ENCODE measurements at regions of chrX and their contacts with region 1.

Region 1: DNA sequence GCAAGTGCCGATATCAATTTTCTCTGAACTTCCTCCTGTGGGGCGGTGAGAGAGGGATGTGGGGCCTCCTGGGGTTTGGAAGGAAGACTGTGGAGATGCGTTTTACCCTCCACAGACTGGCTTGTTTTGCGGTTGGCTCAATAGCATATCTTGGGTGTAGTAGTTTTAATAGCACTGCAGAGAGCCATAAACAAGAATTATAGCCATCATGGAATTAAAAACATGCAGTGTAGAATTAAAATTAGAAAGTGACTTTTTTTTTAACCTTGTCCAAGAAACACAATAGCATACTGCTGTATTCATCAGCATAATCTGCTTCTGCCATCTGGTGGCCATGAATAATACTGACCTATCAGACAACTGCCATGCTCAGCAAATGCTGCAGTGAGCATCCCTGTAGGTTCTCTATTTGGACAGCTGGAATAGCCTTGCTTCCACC is 47.3 kb upstream of the SCML1 start:
- DNase-seq: peak; percentile 70 to 79
- H3K4me3 ChIP-seq: no peak overlapping the region
- H3K4me1 ChIP-seq: peaks cover 19% of the 10 kb centered on the region
- H3K27me3 ChIP-seq: no peaks in the 10 kb centered on the region

Region 2: GRCh38 chrX:17104433-17104832 is 585.6 kb before region 1 on chrX:
- in situ Hi-C with region 1: loop called (anchors 25 kb)
- DNase-seq: no peak
- H3K4me3 ChIP-seq: no peak overlapping the region
- H3K4me1 ChIP-seq: no peaks in the 10 kb centered on the region
- H3K27me3 ChIP-seq: no peaks in the 10 kb centered on the region

Region 3: DNA sequence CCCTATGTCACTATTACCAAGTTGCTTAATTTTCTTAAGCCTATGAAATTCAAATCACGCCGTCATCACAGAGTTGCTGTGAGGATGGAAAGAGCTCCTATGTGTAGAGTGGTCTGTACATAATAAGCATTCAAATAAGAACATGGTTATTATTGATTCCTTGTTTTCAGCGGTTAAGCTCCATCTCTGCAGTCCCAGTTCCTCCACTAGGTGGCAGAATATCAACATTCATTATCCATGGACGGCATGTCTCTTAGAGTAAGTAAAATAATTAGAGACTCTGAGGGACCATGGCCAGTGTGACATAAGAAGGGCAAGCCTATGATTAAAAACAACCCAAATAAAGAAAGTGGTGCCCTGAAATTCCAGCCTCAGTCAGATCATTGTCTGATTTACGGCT is 447.5 kb before region 1 on chrX:
- in situ Hi-C with region 1: loop called (anchors 25 kb)
- DNase-seq: peak; percentile 28 to 70
- H3K4me3 ChIP-seq: no peak overlapping the region
- H3K4me1 ChIP-seq: no peaks in the 10 kb centered on the region
- H3K27me3 ChIP-seq: no peaks in the 10 kb centered on the region

Region 4: DNA sequence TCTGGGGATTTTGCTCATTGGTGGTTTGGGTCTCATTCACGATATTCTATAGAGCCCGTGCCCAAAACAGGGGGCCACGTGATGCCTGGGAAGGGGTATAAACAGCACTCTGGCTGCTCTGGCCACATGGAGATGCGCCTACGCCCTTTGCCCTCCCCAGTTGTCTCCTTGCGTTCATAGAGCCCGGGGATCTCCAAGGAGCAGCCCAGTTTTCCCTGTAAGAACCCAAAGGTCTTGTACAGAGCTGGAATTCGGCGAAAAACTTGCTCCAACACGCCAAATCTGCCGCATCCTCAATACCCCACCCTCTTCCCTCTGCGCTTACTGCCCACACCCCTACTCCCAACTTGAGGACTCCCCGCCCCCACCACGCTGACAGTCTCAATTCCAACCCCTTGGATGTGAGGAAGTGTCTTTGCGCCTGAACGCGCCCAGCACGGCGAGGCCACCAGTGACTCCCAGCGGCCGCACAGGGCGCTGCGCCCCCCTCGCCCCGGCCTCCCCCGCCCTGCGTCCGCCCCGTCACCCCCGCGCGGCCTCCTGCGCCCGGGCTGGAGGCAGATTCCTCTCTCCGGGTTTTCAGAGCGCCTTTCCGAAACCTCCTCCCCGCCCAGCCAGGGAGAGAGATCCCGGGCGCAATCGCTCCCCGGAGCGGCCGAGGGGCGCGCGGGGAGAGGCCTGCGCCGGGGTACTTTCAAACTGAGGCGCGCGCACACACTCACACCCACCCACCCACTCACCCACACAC is 315.2 kb before region 1 on chrX and contains the start of gene NHS:
- in situ Hi-C with region 1: loop called (anchors 25 kb)
- DNase-seq: peak; percentile 62 to 83
- H3K4me3 ChIP-seq: peak within 1 kb of the TSS; percentile 33
- H3K4me1 ChIP-seq: no peaks in the 10 kb centered on the region; the same call in 1 of the 2 replicates
- H3K27me3 ChIP-seq: peaks cover 75% of the 10 kb centered on the region

Region 5: DNA sequence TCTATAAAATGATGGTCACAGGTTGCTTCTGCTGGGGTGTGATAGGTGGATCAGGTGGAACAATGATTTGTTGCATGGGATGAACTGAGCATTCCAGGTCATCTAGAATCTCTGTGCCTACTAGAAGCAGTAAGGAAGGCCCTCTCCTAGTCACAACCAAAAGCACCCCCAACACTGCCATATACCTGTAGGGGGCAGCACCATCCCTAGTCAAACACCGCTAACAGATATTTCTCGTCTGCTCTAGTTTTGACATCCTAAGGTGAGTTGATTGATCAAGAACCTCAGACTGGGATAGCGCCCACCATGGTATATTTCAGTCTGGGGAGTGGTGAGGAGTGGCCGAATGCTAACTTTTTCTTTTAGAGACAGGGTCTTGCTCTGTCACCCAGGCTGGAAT is 154.8 kb before region 1 on chrX:
- in situ Hi-C with region 1: loop called (anchors 5 kb)
- DNase-seq: peak; percentile 49 to 82
- H3K4me3 ChIP-seq: no peak overlapping the region
- H3K4me1 ChIP-seq: no peaks in the 10 kb centered on the region
- H3K27me3 ChIP-seq: no peaks in the 10 kb centered on the region

Region 6: DNA sequence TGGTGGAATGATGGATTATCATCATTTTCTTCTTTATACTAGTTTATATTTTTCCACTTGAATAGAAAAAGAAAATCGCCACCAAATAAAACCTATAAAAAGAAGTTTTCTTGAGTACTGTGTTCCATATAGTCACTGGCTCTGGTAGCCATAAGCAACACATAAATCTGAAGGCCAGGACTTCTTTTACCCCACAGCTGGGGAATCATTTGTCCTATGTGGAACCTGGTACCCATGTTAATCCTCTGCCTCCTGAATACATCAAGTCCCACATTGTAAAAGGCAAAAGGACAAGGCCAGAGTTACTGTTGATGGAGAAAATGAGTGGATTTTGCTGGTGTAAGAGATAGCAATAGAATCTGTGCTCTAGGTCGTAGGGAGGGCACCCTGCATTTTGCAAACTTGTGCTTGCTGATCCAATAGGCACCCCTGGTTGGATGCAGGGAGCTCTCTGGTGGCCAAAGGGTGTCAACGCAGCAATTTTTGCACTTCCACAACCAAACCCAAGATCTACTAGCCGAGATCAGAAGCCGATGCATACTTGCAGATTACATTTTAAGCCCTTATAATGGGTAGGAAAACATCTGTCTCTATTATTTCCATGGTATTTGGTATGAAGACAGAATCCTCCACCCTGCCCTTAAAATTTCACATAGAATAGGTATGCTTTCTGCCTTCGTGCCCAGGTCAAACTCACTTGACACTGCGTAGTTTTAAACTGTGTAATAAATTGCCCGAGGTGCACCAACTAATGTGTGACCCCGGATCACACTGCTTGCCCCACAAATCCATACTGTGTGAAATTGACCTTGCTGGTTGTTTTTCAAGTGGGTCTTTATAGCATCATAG is 98.9 kb before region 1 on chrX:
- in situ Hi-C with region 1: loop called (anchors 10 kb)
- DNase-seq: peak; percentile 79 to 80
- H3K4me3 ChIP-seq: no peak overlapping the region
- H3K4me1 ChIP-seq: peaks cover 30% of the 10 kb centered on the region
- H3K27me3 ChIP-seq: no peaks in the 10 kb centered on the region

Region 7: DNA sequence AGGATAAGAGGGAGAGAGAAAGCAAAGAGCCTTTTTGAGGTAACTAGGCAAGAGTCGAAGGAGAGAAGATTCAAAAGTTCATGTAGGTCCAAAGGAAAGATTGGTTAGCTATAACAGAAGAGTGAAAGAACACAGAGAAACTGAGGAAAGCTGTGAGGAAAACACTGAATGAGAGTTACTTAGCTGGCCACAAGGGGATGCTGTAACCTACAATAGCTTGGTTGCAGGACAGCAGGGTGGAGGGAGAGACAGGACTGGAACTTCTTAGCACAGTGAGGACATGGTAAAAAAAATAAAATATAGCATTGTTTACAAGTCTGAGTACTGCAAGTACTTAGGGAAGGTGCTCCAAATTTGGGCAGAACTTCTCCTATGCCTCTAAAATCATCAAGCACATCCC is 122.8 kb after region 1 on chrX:
- in situ Hi-C with region 1: no loop called
- DNase-seq: peak in 1 of 2 experiments; percentile 5
- H3K4me3 ChIP-seq: no peak overlapping the region
- H3K4me1 ChIP-seq: no peaks in the 10 kb centered on the region
- H3K27me3 ChIP-seq: no peaks in the 10 kb centered on the region